Transverse colon (tissue), 4 donors: ENCODE measurements at regions of chr11 and their contacts with region 1.

Region 1: GRCh38 chr11:68164437-68164836 is 43.2 kb upstream of the CHKA start:
- DNase-seq: no peak
- H3K4me3 ChIP-seq: no peak overlapping the region
- H3K27ac ChIP-seq: no peak overlapping the region
- H3K4me1 ChIP-seq: no peaks in the 10 kb centered on the region
- H3K27me3 ChIP-seq: no peaks in the 10 kb centered on the region
- CTCF ChIP-seq: no peak
- EP300 ChIP-seq: no peak
- POLR2A ChIP-seq: no peak

Region 2: DNA sequence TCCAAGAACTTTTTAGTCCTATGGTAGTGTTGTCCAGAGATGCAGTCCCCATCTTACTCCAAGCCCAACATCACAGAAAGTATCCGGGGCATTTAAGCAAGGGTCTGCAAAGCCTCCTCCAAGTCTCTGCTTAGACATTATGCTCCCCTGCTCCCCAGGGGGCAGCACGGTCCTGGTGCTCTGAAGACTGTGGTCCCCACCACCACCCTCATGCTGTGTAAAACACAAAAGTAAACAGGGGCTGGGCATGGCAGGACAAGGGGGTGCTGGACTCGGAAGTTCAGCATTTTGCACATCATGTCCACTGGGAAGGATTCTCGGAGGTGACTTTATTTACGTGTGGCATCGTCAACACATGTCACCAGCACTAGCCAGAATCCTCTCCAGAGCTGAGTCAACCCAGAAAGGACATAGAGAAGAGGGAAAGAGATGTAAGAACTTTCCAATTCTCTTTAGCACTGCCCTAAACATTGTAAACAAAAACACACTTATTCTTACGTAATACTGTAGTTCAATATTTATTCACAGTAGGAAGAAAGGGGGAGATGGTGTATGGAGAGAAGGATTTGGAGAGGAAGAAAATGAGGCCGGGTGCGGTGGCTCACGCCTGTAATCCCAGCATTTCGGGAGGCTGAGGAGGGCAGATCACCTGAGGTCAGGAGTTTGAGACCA is 87.9 kb before region 1 on chr11:
- in situ Hi-C with region 1: loop called in 1 of 4 experiments (anchors 10 kb)
- intact Hi-C with region 1: no loop called
- DNase-seq: no peak
- H3K4me3 ChIP-seq: no peak overlapping the region
- H3K27ac ChIP-seq: no peak overlapping the region
- H3K4me1 ChIP-seq: peaks cover 0 to 2% (median 0%) of the 10 kb centered on the region in 4 donors
- H3K27me3 ChIP-seq: no peaks in the 10 kb centered on the region
- CTCF ChIP-seq: peak in 1 of 5 experiments; percentile 7
- EP300 ChIP-seq: no peak
- POLR2A ChIP-seq: no peak

Region 3: DNA sequence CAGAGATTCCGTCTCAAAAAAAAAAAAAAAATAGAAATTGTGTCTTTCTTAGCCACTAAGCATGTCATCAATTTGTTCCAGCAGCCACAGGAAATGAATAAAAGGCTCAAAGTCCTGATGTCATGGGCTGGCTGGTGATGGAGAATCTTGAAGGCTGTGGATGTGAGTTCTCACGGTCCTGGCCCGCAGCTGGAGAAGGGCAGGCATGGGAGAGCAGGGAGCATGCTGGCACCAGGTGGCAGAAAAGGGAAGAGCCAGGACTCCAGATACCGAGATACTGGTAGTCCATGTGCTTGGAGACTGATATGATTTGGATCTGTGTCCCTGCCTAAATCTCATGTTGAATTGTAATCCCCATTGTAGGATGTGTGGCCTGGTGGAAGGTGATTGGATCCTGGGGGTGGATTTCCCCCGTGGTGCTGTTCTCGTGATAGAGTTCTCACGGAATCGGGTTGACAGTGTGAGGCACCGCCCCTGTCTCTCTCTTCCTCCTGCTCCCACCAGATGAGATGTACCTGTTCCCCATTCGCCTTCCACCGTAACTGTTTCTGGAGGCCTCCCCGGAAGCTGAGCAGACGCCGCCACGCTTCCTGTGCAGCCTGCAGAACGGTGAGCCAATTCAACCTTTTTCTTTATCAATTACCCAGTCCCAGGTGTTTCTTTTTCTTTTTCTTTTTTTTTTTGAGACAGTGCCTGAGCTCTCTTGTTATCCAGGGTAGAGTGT is 798.3 kb after region 1 on chr11:
- in situ Hi-C with region 1: no loop called
- intact Hi-C with region 1: loop called (anchors 5 kb)
- DNase-seq: peak; percentile 7
- H3K4me3 ChIP-seq: no peak overlapping the region
- H3K27ac ChIP-seq: no peak overlapping the region
- H3K4me1 ChIP-seq: no peaks in the 10 kb centered on the region
- H3K27me3 ChIP-seq: no peaks in the 10 kb centered on the region
- CTCF ChIP-seq: no peak
- EP300 ChIP-seq: no peak
- POLR2A ChIP-seq: no peak